Left ventricle myocardium superior (tissue), 1 donor: ENCODE measurements at regions of chrX and their contacts with region 1.

Region 1: DNA sequence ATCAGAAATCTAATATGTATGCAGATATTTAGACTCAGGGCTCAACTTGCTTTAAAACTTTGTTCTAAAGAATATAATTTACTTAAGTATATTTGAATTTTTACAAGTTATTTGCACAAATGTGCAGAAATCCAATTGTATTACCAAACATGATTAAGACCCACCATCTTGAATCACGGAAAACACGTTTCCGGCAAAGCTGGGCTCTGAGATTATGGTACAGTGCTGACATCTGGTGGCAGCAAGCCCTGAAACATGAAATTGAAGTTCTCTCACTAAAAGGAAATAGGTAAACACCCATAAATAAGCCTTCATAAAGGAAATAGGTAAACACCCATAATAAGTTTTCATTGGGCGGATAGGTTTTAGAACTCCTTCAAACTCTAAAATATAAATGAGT is 98.3 kb upstream of the MAOA start:
- DNase-seq: peak; percentile 41
- ATAC-seq: peak; percentile 45

Region 2: GRCh38 chrX:41796577-41796976 is 1761.2 kb before region 1 on chrX:
- intact Hi-C with region 1: loop called (anchors 10 kb)
- DNase-seq: no peak
- ATAC-seq: no peak

Region 3: DNA sequence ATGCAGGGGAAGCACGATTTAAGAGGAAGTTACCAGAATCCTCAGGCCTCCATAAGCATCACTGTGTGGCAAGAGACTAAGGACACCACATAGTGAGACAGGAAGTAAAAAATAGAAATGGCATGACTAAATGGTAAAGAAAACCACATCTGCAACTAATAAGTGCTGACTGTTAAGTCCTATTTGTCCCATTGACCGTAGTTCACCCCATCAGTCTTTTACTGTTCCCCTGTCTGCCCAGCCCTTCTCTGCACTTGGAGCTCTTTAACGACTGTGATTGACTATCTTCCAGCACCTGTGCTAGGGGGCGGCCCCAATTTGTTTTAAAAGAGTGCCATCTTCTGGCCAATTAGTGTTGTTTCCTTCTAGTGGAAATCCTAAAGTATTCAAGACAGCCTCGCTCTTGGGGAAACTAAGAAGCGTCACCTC is 192.5 kb after region 1 on chrX:
- intact Hi-C with region 1: loop called (anchors 2 kb)
- DNase-seq: peak; percentile 30
- ATAC-seq: peak; percentile 89